ENCODE measurements at regions of chr3 and their contacts with region 1.

Region 1: DNA sequence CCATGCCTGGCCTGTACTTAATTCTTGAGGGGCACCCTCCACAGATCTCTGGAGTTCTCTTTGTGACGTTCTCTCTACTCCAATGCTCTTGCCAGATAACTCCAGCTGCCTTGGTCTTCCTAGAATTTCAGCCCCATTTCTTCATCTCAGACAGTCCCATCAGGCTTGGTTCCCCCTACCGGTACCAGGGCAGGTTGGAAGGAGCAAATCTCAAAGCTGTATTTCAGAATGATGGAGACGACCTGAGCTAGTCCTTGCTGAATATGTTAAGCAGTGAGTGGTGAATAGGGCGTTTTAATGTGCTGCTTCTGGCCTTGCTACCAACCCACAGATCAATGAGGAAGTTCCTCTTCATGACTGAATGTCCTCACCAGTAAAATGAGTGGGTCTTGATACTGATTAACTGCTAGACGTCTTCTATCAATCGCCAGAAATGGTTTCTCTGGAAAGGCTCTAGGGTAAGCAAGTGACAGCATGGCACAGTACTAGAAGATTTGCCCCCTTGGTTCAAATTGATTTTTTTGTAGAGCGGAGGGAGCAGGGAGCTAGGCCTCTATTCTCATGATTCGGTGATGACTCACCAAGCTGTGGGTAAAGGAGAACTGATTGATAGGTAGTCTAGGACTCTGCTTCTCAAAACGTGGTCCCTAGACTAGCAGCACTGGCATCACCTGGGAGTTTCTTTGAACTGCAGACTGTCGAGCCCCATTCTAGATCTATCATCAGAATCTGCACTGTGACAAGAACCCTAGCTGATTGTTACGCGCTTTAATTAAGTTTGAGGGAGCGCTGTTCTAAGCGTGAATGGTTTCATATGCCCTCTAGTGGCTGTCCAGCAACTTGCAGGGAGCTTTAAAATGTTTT is 67.8 kb downstream of the UBP1 start:
- DNase-seq: peak; percentile 56
- CTCF ChIP-seq: peak; percentile 85

Region 2: GRCh38 chr3:33318709-33319380 is 53.6 kb before region 1 on chr3:
- CTCF ChIA-PET with region 1: no interaction called
- POLR2A ChIA-PET with region 1: no interaction called
- DNase-seq: no peak
- CTCF ChIP-seq: no peak

Region 3: GRCh38 chr3:33360136-33360825 is 12.2 kb before region 1 on chr3:
- CTCF ChIA-PET with region 1: interaction called, 32 read pairs
- POLR2A ChIA-PET with region 1: no interaction called
- DNase-seq: no peak
- CTCF ChIP-seq: no peak

Region 4: DNA sequence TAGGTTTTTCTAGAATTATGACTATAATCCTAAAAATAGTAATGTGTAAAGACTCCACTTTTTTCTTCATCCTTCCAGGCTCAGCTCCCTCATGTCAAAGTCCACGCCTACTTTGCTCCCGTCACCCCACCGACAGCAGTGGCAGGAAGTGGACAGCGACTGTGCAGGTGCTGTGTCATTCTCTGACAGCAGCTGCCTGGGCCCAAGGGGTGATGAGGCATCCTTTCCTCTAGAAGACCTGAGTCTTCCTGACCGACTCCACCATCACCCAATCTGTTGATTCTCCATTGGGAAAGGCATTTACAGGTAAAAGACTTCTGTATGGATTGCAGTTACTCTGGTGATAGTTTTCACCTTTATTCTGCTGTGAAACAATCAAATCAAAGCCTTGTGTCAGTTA is 13.0 kb after region 1 on chr3:
- CTCF ChIA-PET with region 1: interaction called, 39 read pairs
- POLR2A ChIA-PET with region 1: interaction called, 3 read pairs
- DNase-seq: no peak
- CTCF ChIP-seq: no peak

Region 5: GRCh38 chr3:33391255-33391995 is 19.0 kb after region 1 on chr3:
- CTCF ChIA-PET with region 1: interaction called, 39 read pairs
- POLR2A ChIA-PET with region 1: interaction called, 3 read pairs
- DNase-seq: no peak
- CTCF ChIP-seq: no peak

Region 6: GRCh38 chr3:33401781-33402180 is 29.3 kb after region 1 on chr3:
- CTCF ChIA-PET with region 1: interaction called, 13 read pairs
- POLR2A ChIA-PET with region 1: no interaction called
- DNase-seq: no peak
- CTCF ChIP-seq: no peak